Stomach (tissue), 19 donors: ENCODE measurements at regions of chr18 and their contacts with region 1.

Region 1: DNA sequence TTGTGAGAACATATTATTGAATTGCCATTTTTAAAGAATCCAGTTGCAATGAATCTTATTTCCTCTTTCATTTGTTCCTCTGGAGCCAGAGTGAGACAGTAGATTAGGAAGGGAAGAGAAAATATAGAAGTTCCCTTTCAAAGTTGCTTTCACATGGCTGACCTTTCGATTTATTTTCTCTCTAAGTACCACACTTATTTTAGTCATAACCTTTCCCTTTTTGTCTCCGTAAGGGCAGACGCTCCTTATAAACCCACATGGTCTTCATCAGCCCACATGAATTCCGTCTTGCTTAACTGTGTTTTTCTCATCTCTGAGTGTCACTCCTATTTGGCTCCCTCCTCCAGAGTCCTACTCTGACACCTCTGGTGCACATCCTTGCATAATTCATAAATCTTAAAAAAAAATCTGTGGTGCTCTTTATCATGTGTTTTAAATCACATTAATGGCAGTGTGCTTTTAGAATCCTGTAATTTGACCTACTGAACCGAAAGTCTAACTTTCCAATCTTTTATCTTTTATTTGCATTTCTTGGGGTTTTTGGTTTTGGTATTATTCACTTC is 38.5 kb upstream of the ZNF396 start:
- DNase-seq: no peak
- H3K4me3 ChIP-seq: no peak overlapping the region
- H3K27ac ChIP-seq: no peak overlapping the region
- H3K4me1 ChIP-seq: peaks cover 0 to 14% (median 4%) of the 10 kb centered on the region in 4 donors
- H3K27me3 ChIP-seq: no peaks in the 10 kb centered on the region
- CTCF ChIP-seq: no peak
- EP300 ChIP-seq: no peak
- POLR2A ChIP-seq: no peak

Region 2: GRCh38 chr18:34999756-35000289 is 415.8 kb before region 1 on chr18:
- intact Hi-C with region 1: no loop called
- DNase-seq: peak in 1 of 2 donors; percentile 74
- H3K4me3 ChIP-seq: no peak overlapping the region
- H3K27ac ChIP-seq: no peak overlapping the region
- H3K4me1 ChIP-seq: peaks cover 0 to 9% (median 4%) of the 10 kb centered on the region in 4 donors
- H3K27me3 ChIP-seq: no peaks in the 10 kb centered on the region
- CTCF ChIP-seq: no peak
- EP300 ChIP-seq: no peak
- POLR2A ChIP-seq: no peak

Region 3: DNA sequence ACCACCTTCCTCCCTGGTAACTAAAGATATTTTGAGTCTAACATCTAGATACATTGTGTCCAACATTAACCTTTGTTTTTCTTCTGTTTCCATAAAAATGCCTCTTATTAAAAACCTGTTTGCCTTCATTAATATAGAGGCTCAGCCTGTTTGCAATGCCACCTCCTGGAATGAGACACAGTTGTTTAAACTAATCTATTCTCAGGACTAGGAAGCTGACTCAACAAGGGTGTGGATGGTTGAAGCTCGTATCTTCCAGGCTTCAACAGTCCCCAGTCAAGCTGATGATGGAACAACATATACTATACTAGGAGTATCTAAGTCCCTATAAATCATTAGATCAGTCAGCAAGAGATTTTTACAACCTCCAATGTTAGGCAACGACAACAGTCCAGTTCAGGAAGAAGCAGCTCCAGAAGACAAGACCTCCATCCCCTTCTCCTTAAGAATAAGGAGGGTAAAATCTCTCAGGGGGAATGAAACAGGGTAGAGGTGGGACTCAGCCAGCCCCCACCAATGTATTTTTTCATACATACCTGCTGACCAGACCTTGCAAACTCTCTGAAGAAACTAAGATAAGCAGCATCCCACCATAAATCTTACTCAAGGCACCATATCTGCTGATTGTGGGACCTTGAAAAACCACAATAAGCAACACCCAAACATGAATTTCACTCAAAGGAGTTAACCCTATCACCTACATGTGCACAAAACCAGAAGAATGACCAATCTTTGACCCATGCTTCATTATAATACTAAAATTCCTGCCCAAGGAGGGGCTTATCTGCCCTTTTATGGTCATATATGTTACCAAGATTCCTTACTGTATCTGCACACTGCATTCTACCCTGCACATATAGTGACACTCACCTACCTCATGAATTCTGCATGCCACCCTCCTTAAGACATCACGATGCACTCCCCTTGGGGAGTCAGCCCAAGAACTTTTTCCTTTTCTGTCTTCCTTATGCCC is 92.8 kb before region 1 on chr18:
- intact Hi-C with region 1: no loop called
- DNase-seq: peak in 1 of 2 donors; percentile 29
- H3K4me3 ChIP-seq: no peak overlapping the region
- H3K27ac ChIP-seq: no peak overlapping the region
- H3K4me1 ChIP-seq: no peaks in the 10 kb centered on the region
- H3K27me3 ChIP-seq: no peaks in the 10 kb centered on the region
- CTCF ChIP-seq: no peak
- EP300 ChIP-seq: no peak
- POLR2A ChIP-seq: no peak

Region 4: GRCh38 chr18:35513181-35513936 is 97.8 kb after region 1 on chr18:
- intact Hi-C with region 1: loop called (anchors 10 kb)
- DNase-seq: no peak
- H3K4me3 ChIP-seq: no peak overlapping the region
- H3K27ac ChIP-seq: peak overlapping the region in 1 of 5 donors; percentile 1
- H3K4me1 ChIP-seq: peaks cover 0 to 5% (median 0%) of the 10 kb centered on the region in 4 donors
- H3K27me3 ChIP-seq: no peaks in the 10 kb centered on the region
- CTCF ChIP-seq: no peak
- EP300 ChIP-seq: no peak
- POLR2A ChIP-seq: no peak